MCF 10A (cell line): ENCODE measurements at regions of chrX and their contacts with region 1.

Region 1: DNA sequence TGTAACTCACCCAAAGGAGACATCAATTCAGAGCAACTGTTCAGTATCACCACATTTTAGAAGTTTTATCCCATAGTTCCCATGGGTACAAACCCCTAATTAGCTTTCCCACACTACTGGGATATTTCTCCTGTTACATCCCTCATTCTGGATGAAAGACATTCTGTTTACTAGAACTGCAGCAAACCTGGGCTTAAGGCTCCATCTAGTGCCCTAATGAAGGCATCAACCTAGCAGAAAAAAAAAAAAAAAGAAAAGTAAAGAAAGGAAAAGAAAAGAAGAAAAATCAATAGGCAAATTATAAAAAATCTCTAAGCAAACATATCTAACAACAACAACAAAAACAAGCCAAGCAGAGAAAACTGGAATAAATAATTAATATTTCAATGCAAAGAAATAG is 133.7 kb upstream of the CPXCR1 start:
- DNase-seq: peak; percentile 55
- H3K4me3 Mint-ChIP-seq: no peak overlapping the region
- H3K27ac Mint-ChIP-seq: no peak overlapping the region
- H3K4me1 Mint-ChIP-seq: no peaks in the 10 kb centered on the region
- H3K27me3 Mint-ChIP-seq: no peaks in the 10 kb centered on the region
- CTCF ChIP-seq: peak; percentile 44

Region 2: DNA sequence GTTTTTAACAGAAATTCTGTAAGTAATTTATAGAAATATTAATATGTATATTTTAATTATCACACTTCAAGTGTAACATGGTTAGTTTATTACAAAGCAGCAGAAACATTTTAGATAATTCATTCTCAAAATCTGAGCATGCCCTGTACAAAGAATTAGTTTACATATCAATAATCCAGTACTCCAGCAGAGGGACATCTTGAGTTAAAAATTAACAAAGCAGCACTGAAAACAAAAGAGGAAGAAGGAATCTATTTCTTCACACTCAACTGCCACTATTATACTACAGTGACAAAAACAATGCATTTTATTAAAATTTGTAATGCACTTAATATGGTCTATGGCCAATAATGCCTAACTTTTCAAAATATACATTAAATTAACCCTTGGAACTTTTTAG is 1274.8 kb before region 1 on chrX:
- CTCF ChIA-PET with region 1: interaction called, 3 read pairs
- POLR2A ChIA-PET with region 1: no interaction called
- intact Hi-C with region 1: loop called (anchors 2 kb)
- DNase-seq: peak; percentile 49
- H3K4me3 Mint-ChIP-seq: no peak overlapping the region
- H3K27ac Mint-ChIP-seq: no peak overlapping the region
- H3K4me1 Mint-ChIP-seq: no peaks in the 10 kb centered on the region
- H3K27me3 Mint-ChIP-seq: peaks cover 17% of the 10 kb centered on the region
- CTCF ChIP-seq: peak; percentile 40

Region 3: GRCh38 chrX:87697409-87697808 is 915.9 kb before region 1 on chrX:
- CTCF ChIA-PET with region 1: interaction called, 4 read pairs
- POLR2A ChIA-PET with region 1: no interaction called
- intact Hi-C with region 1: loop called (anchors 2 kb)
- DNase-seq: no peak
- H3K4me3 Mint-ChIP-seq: no peak overlapping the region
- H3K27ac Mint-ChIP-seq: no peak overlapping the region
- H3K4me1 Mint-ChIP-seq: no peaks in the 10 kb centered on the region
- H3K27me3 Mint-ChIP-seq: peaks cover 18% of the 10 kb centered on the region
- CTCF ChIP-seq: peak; percentile 13

Region 4: DNA sequence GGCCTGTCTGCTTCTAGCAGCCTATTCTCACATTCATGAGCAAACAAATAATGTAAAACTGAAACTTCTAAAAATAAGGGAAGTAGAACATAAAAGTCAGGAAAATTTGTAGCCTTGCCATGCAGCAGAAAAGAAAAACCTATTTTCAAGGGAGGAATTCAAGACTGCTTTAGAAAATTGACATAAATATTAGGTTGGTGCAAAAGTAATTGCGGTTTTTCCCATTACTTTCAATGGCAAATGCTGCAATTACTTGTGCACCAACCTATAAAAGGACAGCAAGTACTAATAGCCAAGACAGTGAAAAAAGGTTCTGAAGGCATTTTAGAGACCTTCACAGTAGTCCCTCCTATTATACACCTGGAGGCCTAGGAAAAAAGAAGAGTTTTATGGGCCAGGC is 638.0 kb before region 1 on chrX:
- CTCF ChIA-PET with region 1: interaction called, 6 read pairs
- POLR2A ChIA-PET with region 1: no interaction called
- intact Hi-C with region 1: loop called (anchors 1 kb)
- DNase-seq: no peak
- H3K4me3 Mint-ChIP-seq: no peak overlapping the region
- H3K27ac Mint-ChIP-seq: no peak overlapping the region
- H3K4me1 Mint-ChIP-seq: no peaks in the 10 kb centered on the region
- H3K27me3 Mint-ChIP-seq: no peaks in the 10 kb centered on the region
- CTCF ChIP-seq: no peak

Region 5: GRCh38 chrX:88135735-88136134 is 477.6 kb before region 1 on chrX:
- CTCF ChIA-PET with region 1: interaction called, 9 read pairs
- POLR2A ChIA-PET with region 1: no interaction called
- intact Hi-C with region 1: loop called (anchors 1 kb)
- DNase-seq: peak; percentile 13
- H3K4me3 Mint-ChIP-seq: no peak overlapping the region
- H3K27ac Mint-ChIP-seq: no peak overlapping the region
- H3K4me1 Mint-ChIP-seq: no peaks in the 10 kb centered on the region
- H3K27me3 Mint-ChIP-seq: peaks cover 15% of the 10 kb centered on the region
- CTCF ChIP-seq: peak; percentile 19

Region 6: GRCh38 chrX:88355252-88355651 is 258.1 kb before region 1 on chrX:
- CTCF ChIA-PET with region 1: no interaction called
- POLR2A ChIA-PET with region 1: no interaction called
- intact Hi-C with region 1: no loop called
- DNase-seq: no peak
- H3K4me3 Mint-ChIP-seq: no peak overlapping the region
- H3K27ac Mint-ChIP-seq: no peak overlapping the region
- H3K4me1 Mint-ChIP-seq: no peaks in the 10 kb centered on the region
- H3K27me3 Mint-ChIP-seq: no peaks in the 10 kb centered on the region
- CTCF ChIP-seq: no peak

Region 7: GRCh38 chrX:88425739-88426138 is 187.6 kb before region 1 on chrX:
- CTCF ChIA-PET with region 1: interaction called, 5 read pairs
- POLR2A ChIA-PET with region 1: no interaction called
- intact Hi-C with region 1: loop called (anchors 1 kb)
- DNase-seq: peak; percentile 31
- H3K4me3 Mint-ChIP-seq: peak overlapping the region; percentile 73
- H3K27ac Mint-ChIP-seq: peak overlapping the region; percentile 91
- H3K4me1 Mint-ChIP-seq: no peaks in the 10 kb centered on the region
- H3K27me3 Mint-ChIP-seq: no peaks in the 10 kb centered on the region
- CTCF ChIP-seq: peak; percentile 34